Right ventricle myocardium superior (tissue), 1 donor: ENCODE measurements at regions of chr2 and their contacts with region 1.

Region 1: DNA sequence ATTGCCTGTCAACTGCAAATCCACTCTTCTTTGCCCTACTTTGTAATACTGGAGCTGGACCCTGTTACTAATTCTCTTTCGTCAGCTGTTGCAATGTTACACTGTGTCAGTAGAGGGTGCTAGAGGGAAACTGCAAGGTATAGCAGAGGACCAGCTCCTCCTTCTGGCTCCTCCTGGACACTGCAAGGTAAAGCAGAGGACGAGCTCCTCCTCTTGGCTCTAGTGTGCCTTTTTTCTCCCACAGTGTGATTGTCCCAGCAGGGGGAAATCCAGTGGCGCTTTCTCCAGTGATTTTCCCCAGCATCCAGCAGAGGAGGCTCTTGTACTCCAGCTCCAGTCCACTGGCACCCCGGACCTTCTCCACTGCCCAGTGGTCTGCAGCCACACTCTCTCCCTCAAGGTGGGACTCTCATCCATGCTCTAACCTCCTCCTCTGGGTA is 95.6 kb downstream of the CAPN13 start:
- DNase-seq: peak; percentile 84
- ATAC-seq: peak; percentile 72

Region 2: GRCh38 chr2:30165050-30165520 is 546.6 kb before region 1 on chr2:
- intact Hi-C with region 1: loop called (anchors 5 kb)
- DNase-seq: no peak
- ATAC-seq: peak; percentile 86

Region 3: GRCh38 chr2:30208452-30208851 is 503.2 kb before region 1 on chr2:
- intact Hi-C with region 1: loop called (anchors 5 kb)
- DNase-seq: peak; percentile 68
- ATAC-seq: peak; percentile 94

Region 4: GRCh38 chr2:30336978-30337841 is 374.5 kb before region 1 on chr2:
- intact Hi-C with region 1: loop called (anchors 10 kb)
- DNase-seq: no peak
- ATAC-seq: no peak

Region 5: DNA sequence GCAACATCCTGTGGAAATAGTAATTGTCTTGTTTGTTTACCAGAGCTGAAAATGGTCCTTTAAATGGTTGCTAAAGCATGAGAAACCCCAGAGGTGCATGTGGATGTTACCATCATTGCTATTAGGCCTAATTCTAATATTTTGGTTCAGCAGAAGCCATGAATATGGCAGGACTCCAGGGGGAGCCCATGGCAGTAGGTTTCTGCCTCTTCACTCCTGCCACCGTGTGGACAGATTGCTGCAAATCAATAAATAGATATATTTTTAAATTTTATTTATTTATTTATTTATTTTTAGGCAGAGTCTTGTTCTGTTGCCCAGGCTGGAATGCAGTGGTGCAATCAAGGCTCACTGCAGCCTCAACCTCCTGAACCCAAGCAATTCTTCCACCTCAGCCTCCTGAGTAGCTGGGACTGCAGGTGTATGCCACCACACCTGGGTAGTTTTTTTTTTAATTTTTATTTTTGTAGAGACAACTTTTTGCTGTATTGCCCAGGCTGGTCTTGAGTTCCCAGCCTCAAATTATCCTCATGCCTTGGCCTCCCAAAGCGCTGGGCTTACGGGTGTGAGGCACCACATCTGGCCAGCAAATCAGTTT is 150.5 kb after region 1 on chr2:
- intact Hi-C with region 1: loop called (anchors 5 kb)
- DNase-seq: peak; percentile 59
- ATAC-seq: peak; percentile 31

Region 6: GRCh38 chr2:31170071-31170698 is 458.5 kb after region 1 on chr2:
- intact Hi-C with region 1: loop called (anchors 2 kb)
- DNase-seq: peak; percentile 58
- ATAC-seq: peak; percentile 94

Region 7: GRCh38 chr2:31333527-31334183 is 622.0 kb after region 1 on chr2:
- intact Hi-C with region 1: loop called (anchors 5 kb)
- DNase-seq: peak; percentile 80
- ATAC-seq: peak; percentile 86